ENCODE measurements at regions of chr10 and their contacts with region 1.

Region 1: DNA sequence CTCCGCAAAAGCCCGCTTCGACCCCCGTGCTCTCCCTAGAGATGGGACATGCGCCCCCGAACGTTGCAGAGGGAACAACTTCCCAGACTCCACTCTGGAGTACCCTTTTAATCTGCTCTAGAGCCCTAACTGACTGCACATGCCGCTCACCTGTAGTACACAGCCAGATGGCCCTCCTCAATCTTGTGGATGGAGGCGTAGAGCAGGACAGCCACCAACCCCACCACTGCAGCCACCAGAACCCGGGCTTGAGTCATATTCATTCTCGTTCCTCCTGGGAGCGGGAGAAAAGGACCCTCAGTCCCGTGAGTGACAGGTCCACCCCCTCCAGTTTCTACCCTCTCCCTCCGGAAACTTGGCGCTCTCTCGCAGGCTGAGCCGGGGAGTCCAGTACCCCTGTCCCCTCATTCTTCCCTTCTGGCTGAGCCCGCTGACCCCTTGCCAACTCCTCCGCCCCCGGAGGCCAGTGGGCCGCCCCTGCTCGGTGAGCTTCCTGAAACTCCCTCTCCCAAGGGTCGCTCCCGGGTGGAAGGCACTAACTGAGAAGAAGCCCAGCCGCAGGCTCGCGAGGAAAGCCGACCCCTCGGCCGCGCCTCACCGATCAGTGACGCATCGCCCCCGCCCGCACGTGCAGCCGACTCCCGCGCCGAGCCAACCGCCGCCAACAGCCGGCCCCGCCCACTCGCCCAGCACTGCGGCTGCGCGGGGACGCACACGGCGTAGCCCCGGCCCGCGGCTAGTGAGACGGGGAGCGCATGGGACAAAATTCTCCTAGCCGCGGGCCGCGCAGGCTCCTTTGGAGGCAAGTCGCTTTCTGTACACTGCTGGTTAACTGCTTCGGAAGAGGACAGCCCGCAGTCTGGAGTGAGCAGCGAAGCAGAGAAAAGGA is at the start of gene ERLIN1:
- DNase-seq: peak; percentile 89 to 91 (median 91)
- H3K4me3 ChIP-seq: peak within 1 kb of the TSS; percentile 80 to 98
- H3K4me3 Mint-ChIP-seq: peak within 1 kb of the TSS; percentile 93 to 98 (median 96)
- H3K27ac ChIP-seq: peak within 1 kb of the TSS; percentile 72
- H3K27ac Mint-ChIP-seq: peak within 1 kb of the TSS; percentile 90 to 98 (median 97)
- H3K4me1 ChIP-seq: peaks cover 38% of the 10 kb centered on the region
- H3K4me1 Mint-ChIP-seq: peaks cover 37 to 66% (median 49%) of the 10 kb centered on the region in 4 donors
- H3K27me3 ChIP-seq: no peaks in the 10 kb centered on the region
- H3K27me3 Mint-ChIP-seq: no peaks in the 10 kb centered on the region
- total RNA-seq, gene ERLIN1: 11.6 to 12.5 TPM

Region 2: GRCh38 chr10:100167553-100168312 is 17.9 kb before region 1 on chr10:
- CTCF ChIA-PET with region 1: no interaction called
- POLR2A ChIA-PET with region 1: interaction called, 4 read pairs
- intact Hi-C with region 1: loop called (anchors 2 kb)
- DNase-seq: peak in 2 of 5 donors; percentile 18 to 20
- H3K4me3 ChIP-seq: peak overlapping the region in 1 of 2 donors; percentile 28
- H3K4me3 Mint-ChIP-seq: peak overlapping the region; percentile 67 to 92 (median 80)
- H3K27ac ChIP-seq: peak overlapping the region; percentile 62
- H3K27ac Mint-ChIP-seq: peak overlapping the region; percentile 67 to 97 (median 91)
- H3K4me1 ChIP-seq: peaks cover 22% of the 10 kb centered on the region
- H3K4me1 Mint-ChIP-seq: peaks cover 21 to 35% (median 26%) of the 10 kb centered on the region in 4 donors
- H3K27me3 ChIP-seq: no peaks in the 10 kb centered on the region
- H3K27me3 Mint-ChIP-seq: no peaks in the 10 kb centered on the region

Region 3: GRCh38 chr10:100229819-100230422 is 44.3 kb after region 1 on chr10:
- CTCF ChIA-PET with region 1: no interaction called
- POLR2A ChIA-PET with region 1: interaction called, 7 read pairs
- intact Hi-C with region 1: loop called (anchors 1 kb)
- DNase-seq: no peak
- H3K4me3 ChIP-seq: peak overlapping the region; percentile 81 to 88
- H3K4me3 Mint-ChIP-seq: peak overlapping the region; percentile 85 to 96 (median 93)
- H3K27ac ChIP-seq: peak overlapping the region; percentile 77
- H3K27ac Mint-ChIP-seq: peak overlapping the region; percentile 80 to 96 (median 91)
- H3K4me1 ChIP-seq: peaks cover 31% of the 10 kb centered on the region
- H3K4me1 Mint-ChIP-seq: peaks cover 14 to 40% (median 28%) of the 10 kb centered on the region in 4 donors
- H3K27me3 ChIP-seq: no peaks in the 10 kb centered on the region
- H3K27me3 Mint-ChIP-seq: no peaks in the 10 kb centered on the region

Region 4: DNA sequence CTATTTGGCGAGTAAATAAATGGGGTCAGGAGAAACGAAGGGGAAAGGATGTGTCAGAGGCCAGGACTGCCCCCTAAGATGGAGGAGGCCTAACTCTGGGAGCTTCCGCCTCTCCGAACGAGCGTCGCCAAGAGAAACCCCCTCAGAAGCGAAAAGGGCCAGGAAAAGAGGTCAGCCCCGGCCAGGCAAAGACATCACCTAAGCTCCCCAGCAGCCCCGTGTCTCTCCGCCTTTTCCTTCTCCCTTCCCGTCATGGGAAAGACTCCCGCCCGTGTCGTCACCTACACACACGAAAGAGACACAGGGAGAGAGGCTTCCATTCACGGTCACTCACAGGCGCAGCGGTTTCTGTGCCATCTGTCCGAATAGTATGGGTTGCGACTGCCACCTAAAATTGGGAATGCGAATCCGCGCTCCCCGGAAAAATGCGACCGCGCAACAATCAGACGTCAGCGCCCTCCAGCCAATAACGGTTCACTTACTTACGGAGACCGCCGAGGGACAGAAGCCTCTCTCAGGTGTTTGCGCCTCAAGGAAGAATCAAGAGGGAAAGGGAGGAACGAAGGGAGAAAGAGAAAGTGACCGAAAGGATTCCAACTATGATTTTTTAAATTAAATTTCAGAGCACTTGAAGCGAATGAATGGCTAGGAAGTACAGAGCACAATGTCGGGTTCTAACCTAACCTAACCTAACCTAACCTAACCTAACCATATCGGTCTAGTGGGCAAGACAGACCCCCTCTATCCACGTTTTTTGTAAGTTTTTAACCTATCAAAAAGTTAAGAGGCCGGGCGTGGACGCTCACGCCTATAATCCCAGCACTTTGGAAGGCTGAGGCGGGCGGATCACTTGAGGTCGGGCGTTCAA is 81.9 kb after region 1 on chr10 and contains the start of gene CWF19L1:
- CTCF ChIA-PET with region 1: no interaction called
- POLR2A ChIA-PET with region 1: interaction called, 3 read pairs
- intact Hi-C with region 1: loop called (anchors 5 kb)
- DNase-seq: peak; percentile 67 to 75 (median 69)
- H3K4me3 ChIP-seq: peak within 1 kb of the TSS; percentile 78 to 95
- H3K4me3 Mint-ChIP-seq: peak within 1 kb of the TSS; percentile 97 to 100 (median 100)
- H3K27ac ChIP-seq: peak within 1 kb of the TSS; percentile 90
- H3K27ac Mint-ChIP-seq: peak within 1 kb of the TSS; percentile 94 to 100 (median 99)
- H3K4me1 ChIP-seq: peaks cover 29% of the 10 kb centered on the region
- H3K4me1 Mint-ChIP-seq: peaks cover 17 to 39% (median 24%) of the 10 kb centered on the region in 4 donors
- H3K27me3 ChIP-seq: no peaks in the 10 kb centered on the region
- H3K27me3 Mint-ChIP-seq: no peaks in the 10 kb centered on the region
- total RNA-seq, gene CWF19L1: 40.7 to 44.0 TPM

Region 5: GRCh38 chr10:100286051-100287033 is 100.7 kb after region 1 on chr10 and contains the start of gene BLOC1S2:
- CTCF ChIA-PET with region 1: no interaction called
- POLR2A ChIA-PET with region 1: no interaction called
- intact Hi-C with region 1: loop called (anchors 5 kb)
- DNase-seq: peak; percentile 85 to 93 (median 86)
- H3K4me3 ChIP-seq: peak within 1 kb of the TSS; percentile 95 to 96
- H3K4me3 Mint-ChIP-seq: peak within 1 kb of the TSS; percentile 97 to 100 (median 100)
- H3K27ac ChIP-seq: peak within 1 kb of the TSS; percentile 98
- H3K27ac Mint-ChIP-seq: peak within 1 kb of the TSS; percentile 95 to 99 (median 98)
- H3K4me1 ChIP-seq: peaks cover 40% of the 10 kb centered on the region
- H3K4me1 Mint-ChIP-seq: peaks cover 21 to 32% (median 25%) of the 10 kb centered on the region in 4 donors
- H3K27me3 ChIP-seq: no peaks in the 10 kb centered on the region
- H3K27me3 Mint-ChIP-seq: no peaks in the 10 kb centered on the region
- total RNA-seq, gene BLOC1S2: 32.0 to 38.5 TPM

Measured in CD4-positive, alpha-beta memory T cell (primary cell).